Left lung (tissue), 14 donors: ENCODE measurements at regions of chrX and their contacts with region 1.

Region 1: DNA sequence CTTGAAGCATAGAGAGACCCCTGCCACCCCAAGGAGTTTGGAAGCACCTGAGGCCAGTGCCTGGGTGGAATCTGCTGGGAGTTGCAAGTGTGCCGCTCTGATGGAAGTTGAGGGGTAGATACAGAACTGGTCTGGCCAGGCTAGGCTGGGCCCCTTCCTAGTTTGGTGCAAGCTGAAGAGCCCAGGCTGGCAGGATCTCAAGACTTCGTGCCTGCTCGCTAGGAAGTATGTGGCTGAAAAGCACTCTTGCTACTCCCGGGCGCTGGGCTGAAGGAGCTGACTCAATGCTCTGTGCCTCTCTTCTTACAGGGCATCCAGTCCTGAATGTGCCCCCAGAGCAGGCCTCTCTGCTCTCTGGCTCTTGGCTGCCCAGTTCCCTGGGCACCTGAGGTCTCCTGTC is 51.7 kb upstream of the PJA1 start:
- DNase-seq: peak in 2 of 4 donors; percentile 46 to 53
- ATAC-seq: peak; percentile 86
- H3K4me3 ChIP-seq: no peak overlapping the region
- H3K27ac ChIP-seq: no peak overlapping the region
- H3K4me1 ChIP-seq: no peaks in the 10 kb centered on the region
- H3K27me3 ChIP-seq: peaks cover 0 to 10% of the 10 kb centered on the region in 2 donors
- CTCF ChIP-seq: no peak

Region 2: GRCh38 chrX:69027181-69028005 is 189.5 kb before region 1 on chrX:
- intact Hi-C with region 1: no loop called
- DNase-seq: peak in 1 of 4 donors; percentile 33
- ATAC-seq: peak; percentile 45
- H3K4me3 ChIP-seq: no peak overlapping the region
- H3K27ac ChIP-seq: peak overlapping the region in 1 of 2 donors; percentile 23
- H3K4me1 ChIP-seq: peaks cover 0 to 7% of the 10 kb centered on the region in 2 donors
- H3K27me3 ChIP-seq: no peaks in the 10 kb centered on the region
- CTCF ChIP-seq: no peak

Region 3: GRCh38 chrX:69088171-69088938 is 128.6 kb before region 1 on chrX:
- intact Hi-C with region 1: loop called in 1 of 2 experiments (anchors 10 kb)
- DNase-seq: peak in 1 of 4 donors; percentile 56
- ATAC-seq: peak; percentile 27
- H3K4me3 ChIP-seq: no peak overlapping the region
- H3K27ac ChIP-seq: no peak overlapping the region
- H3K4me1 ChIP-seq: no peaks in the 10 kb centered on the region
- H3K27me3 ChIP-seq: peaks cover 0 to 3% of the 10 kb centered on the region in 2 donors
- CTCF ChIP-seq: no peak